ENCODE measurements at regions of chr17 and their contacts with region 1.

Region 1: GRCh38 chr17:46044286-46044928 is 45.4 kb downstream of the STH start:
- DNase-seq: peak; percentile 81 to 93
- ATAC-seq: peak; percentile 91 to 96
- H3K4me3 ChIP-seq: no peak overlapping the region
- H3K27ac ChIP-seq: peak overlapping the region; percentile 7 to 45; a peak in 3 of 6 replicates
- H3K4me1 ChIP-seq: peaks cover 23% of the 10 kb centered on the region
- CTCF ChIP-seq: peak; percentile 99
- EP300 ChIP-seq: no peak
- POLR2A ChIP-seq: no peak
- RAD21 ChIP-seq: peak; percentile 89 to 91

Region 2: GRCh38 chr17:46007461-46007965 is 36.9 kb before region 1 on chr17:
- CTCF ChIA-PET with region 1: interaction called, 27 read pairs
- POLR2A ChIA-PET with region 1: no interaction called
- DNase-seq: no peak
- ATAC-seq: no peak
- H3K4me3 ChIP-seq: no peak overlapping the region
- H3K27ac ChIP-seq: no peak overlapping the region
- H3K4me1 ChIP-seq: peaks cover 23% of the 10 kb centered on the region
- CTCF ChIP-seq: no peak
- EP300 ChIP-seq: no peak
- POLR2A ChIP-seq: no peak
- RAD21 ChIP-seq: no peak

Region 3: GRCh38 chr17:46020023-46020761 is 24.2 kb before region 1 on chr17:
- CTCF ChIA-PET with region 1: interaction called, 19 read pairs
- POLR2A ChIA-PET with region 1: no interaction called
- DNase-seq: no peak
- ATAC-seq: no peak
- H3K4me3 ChIP-seq: no peak overlapping the region
- H3K27ac ChIP-seq: no peak overlapping the region
- H3K4me1 ChIP-seq: no peaks in the 10 kb centered on the region
- CTCF ChIP-seq: no peak
- EP300 ChIP-seq: no peak
- POLR2A ChIP-seq: no peak
- RAD21 ChIP-seq: no peak

Region 4: DNA sequence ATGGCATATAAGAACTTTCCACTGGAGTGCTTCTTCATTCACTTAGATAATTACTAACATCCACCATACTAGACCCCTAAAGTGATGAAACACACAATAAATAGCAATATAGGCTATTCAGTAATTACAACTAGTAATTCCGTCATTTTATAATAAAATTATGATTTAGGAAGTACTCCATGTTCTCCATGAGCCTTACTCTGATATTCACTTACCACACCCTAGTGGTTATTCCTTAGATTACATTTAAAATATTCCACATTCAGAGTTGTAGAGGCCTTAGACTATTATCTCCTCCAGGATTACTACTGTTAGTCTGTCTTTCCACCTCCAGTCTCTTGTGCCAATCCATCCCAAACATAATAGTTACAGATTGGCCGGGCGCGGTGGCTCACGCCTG is 17.0 kb after region 1 on chr17:
- CTCF ChIA-PET with region 1: interaction called, 183 read pairs
- POLR2A ChIA-PET with region 1: no interaction called
- DNase-seq: peak; percentile 42 to 49
- ATAC-seq: peak in 1 of 2 experiments; percentile 52; a peak in 3 of 6 replicates
- H3K4me3 ChIP-seq: no peak overlapping the region
- H3K27ac ChIP-seq: no peak overlapping the region
- H3K4me1 ChIP-seq: peaks cover 86% of the 10 kb centered on the region
- CTCF ChIP-seq: peak; percentile 46; the same call in 2 of the 3 replicates
- EP300 ChIP-seq: no peak
- POLR2A ChIP-seq: no peak
- RAD21 ChIP-seq: peak in 1 of 2 experiments; percentile 55; a peak in 4 of 5 replicates

Region 5: GRCh38 chr17:46089389-46089965 is 45.1 kb after region 1 on chr17:
- CTCF ChIA-PET with region 1: interaction called, 15 read pairs
- POLR2A ChIA-PET with region 1: no interaction called
- DNase-seq: no peak
- ATAC-seq: no peak
- H3K4me3 ChIP-seq: no peak overlapping the region
- H3K27ac ChIP-seq: no peak overlapping the region
- H3K4me1 ChIP-seq: peaks cover 10% of the 10 kb centered on the region; the same call in 2 of the 3 replicates
- CTCF ChIP-seq: no peak
- EP300 ChIP-seq: no peak
- POLR2A ChIP-seq: no peak
- RAD21 ChIP-seq: no peak

Region 6: DNA sequence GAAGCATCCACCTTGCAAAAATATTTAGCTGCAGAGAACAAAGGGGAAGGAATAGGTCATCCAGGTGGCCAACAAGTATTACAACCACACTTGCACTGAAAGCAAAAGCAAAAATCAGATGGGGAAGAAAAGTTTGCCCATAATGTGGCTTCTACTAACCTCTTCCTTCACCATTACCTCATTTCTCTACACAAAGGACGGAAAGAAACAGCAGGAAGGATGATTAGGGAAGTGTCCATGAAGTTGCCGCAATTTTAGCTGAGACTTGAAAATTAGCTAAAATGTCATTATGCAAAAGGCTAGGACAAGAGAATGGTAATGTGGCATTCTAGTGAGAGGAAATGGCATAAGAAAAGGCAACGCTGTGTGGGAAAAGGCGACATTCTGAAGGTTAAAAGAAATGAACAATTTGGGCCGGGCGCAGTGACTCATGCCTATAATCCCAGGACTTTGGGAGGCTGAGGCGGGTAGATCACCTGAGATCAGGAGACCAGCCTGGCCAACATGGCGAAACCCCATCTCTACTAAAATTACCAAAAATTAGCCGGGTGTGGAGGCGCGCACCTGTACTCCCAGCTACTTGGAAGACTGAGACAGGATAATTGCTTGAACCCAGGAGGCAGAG is 135.1 kb after region 1 on chr17:
- CTCF ChIA-PET with region 1: interaction called, 20 read pairs
- POLR2A ChIA-PET with region 1: no interaction called
- DNase-seq: no peak
- ATAC-seq: no peak
- H3K4me3 ChIP-seq: no peak overlapping the region
- H3K27ac ChIP-seq: no peak overlapping the region
- H3K4me1 ChIP-seq: peaks cover 66% of the 10 kb centered on the region
- CTCF ChIP-seq: no peak
- EP300 ChIP-seq: no peak
- POLR2A ChIP-seq: no peak
- RAD21 ChIP-seq: no peak

Region 7: GRCh38 chr17:46212634-46213435 is 168.4 kb after region 1 on chr17:
- CTCF ChIA-PET with region 1: interaction called, 24 read pairs
- POLR2A ChIA-PET with region 1: interaction called, 6 read pairs
- DNase-seq: peak; percentile 88 to 95
- ATAC-seq: peak; percentile 91 to 92
- H3K4me3 ChIP-seq: no peak overlapping the region
- H3K27ac ChIP-seq: no peak overlapping the region
- H3K4me1 ChIP-seq: no peaks in the 10 kb centered on the region
- CTCF ChIP-seq: peak; percentile 99
- EP300 ChIP-seq: no peak
- POLR2A ChIP-seq: no peak
- RAD21 ChIP-seq: peak; percentile 91

Measured in A549 (cell line).